RWPE1 (cell line): ENCODE measurements at regions of chr13 and their contacts with region 1.

Region 1: DNA sequence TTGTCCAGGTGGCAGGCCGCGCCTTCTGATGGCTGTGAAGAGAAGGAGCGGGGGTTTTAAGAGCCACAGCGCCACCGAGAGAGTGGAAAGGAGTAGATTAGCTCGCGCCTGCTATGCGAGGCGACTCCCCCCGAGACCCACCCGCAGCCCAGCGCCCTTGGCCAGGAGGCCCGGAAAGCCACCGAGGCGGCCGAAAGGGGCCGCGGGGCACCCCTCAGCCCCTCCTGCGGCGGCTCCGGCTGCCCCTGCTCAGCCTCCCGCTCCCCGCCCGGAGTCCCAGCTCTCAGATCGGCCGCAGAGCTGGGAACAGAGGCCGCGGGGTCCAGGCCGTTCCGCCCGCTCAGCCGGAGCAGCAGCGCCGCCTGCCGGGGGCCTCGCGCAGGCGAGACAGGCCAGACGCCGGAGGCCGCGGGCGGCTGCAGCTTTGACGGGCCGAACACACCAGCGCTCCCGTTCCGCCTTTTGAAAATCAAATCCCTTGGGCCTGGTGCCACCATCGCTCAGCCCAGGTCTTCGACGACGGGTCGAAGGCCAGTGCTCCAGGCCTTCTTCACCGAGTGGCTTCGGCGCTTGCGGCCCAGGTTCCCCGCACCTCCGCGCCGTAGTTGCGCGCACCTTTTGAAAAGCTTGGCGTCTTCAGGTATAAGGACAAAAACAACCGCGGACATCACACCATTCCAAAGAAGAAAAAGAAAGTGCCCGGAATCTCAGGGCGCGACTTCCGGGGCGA is 15.3 kb downstream of the CDX2 start:
- DNase-seq: peak; percentile 64
- H3K27ac ChIP-seq: 0 out of 2 replicates have a peak overlapping the region, but pooled peaks have one; percentile 15
- CTCF ChIP-seq: peak; percentile 79

Region 2: GRCh38 chr13:27868641-27869435 is 85.0 kb before region 1 on chr13:
- CTCF ChIA-PET with region 1: interaction called, 12 read pairs
- POLR2A ChIA-PET with region 1: no interaction called
- DNase-seq: peak; percentile 20
- H3K27ac ChIP-seq: no peak overlapping the region
- CTCF ChIP-seq: peak; percentile 40

Region 3: DNA sequence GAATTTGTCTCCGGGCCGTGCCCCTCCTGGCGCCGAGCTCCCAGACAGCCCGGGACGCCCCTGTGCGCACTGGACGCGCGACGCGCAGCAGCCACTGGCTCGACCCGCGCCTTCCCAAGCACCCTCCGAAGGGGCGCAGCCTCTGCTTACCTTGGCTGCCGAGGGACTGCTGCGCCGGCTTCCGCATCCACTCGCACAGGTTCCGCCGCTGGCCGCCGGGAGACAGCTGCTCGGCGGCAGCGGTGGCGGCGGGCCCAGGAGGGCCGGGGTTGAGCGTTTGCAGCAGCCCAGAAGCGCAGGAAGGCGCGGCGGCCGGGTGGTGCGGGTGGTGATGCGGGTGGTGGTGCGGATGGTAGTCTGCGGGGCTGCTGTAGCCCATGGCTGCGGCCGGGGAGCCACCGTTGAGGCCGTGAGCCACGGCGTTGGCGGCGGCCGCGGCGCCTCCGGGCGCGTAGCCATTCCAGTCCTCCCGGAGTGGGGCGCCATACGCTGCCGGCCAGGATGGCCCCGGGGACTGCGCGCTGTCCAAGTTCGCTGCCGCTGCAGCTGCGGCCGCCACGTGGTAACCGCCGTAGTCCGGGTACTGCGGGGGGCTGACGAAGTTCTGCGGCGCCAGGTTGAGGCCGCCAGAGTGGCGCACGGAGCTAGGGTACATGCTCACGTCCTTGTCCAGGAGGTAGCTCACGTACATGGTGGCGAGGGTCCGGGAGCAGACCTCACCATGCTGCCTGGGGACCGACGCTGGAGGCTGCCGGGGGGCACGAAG is 14.7 kb after region 1 on chr13:
- CTCF ChIA-PET with region 1: interaction called, 11 read pairs
- POLR2A ChIA-PET with region 1: no interaction called
- DNase-seq: no peak
- H3K27ac ChIP-seq: no peak overlapping the region
- CTCF ChIP-seq: no peak